Activated T-helper 2 cell treated with anti-CD3 and anti-CD28 coated beads, Interferon-gamma antibody, Interleukin-2, Interleukin-4, amounts not matched to agents 10 μg/mL and 5 μg/mL and 100 μg/mL, durations not matched to agents 14 hours and 24 hours and 36 hours (primary cell): ENCODE measurements at regions of chr19 and their contacts with region 1.

Region 1: DNA sequence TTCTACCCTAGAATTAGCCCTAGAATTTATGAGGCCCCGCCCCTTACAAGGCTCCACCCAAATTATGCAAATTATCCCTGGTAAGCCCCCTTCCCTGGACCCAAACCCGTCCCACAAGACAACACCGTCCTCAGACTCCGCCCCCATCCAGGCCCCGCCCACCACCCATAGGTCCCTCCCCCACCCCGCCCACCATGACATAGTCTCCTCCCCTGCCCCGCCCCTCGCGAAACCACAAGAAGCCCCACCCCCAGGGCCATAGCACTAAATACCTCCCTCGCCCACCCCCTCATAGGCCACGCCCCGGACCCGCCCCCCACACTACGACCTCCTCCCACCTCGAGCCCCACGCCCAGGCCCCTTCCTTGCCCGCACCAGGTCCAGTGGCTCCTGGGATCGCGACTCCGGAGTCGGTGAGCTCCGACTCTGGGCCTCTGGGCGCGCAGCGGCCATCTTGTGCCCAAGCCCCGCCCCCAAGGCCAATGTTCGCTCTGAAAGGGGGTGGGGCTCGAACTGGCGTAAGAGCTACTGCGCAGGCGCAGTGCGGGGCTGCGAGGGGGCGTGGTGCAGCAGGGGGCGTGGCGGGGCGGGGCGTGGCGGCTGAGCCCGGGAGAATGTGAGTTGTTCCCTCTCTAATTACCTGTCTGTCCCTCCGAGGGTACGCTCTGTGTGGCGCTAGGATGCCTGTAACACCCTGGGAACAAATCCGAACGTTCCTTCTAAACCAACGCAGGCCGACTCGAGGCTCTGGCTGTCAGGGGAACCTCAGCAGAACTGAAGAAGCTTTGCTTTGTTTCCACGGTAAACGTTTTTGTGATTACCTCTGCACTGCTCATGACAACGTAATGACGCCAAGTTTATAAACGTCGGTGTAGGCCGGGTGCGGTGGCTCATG is at the start of gene ZNF784:
- DNase-seq: peak; percentile 89
- H3K4me3 Mint-ChIP-seq: peak within 1 kb of the TSS; percentile 89
- H3K27ac Mint-ChIP-seq: peak within 1 kb of the TSS; percentile 98
- H3K4me1 Mint-ChIP-seq: peaks cover 36% of the 10 kb centered on the region
- H3K27me3 Mint-ChIP-seq: peaks cover 6% of the 10 kb centered on the region
- total RNA-seq, gene ZNF784: 4.3 and 4.9 TPM in 2 replicates

Region 2: GRCh38 chr19:55117636-55118391 is 506.5 kb before region 1 on chr19 and contains the start of gene PPP1R12C:
- intact Hi-C with region 1: loop called (anchors 10 kb)
- DNase-seq: peak; percentile 96
- H3K4me3 Mint-ChIP-seq: peak within 1 kb of the TSS; percentile 100
- H3K27ac Mint-ChIP-seq: peak within 1 kb of the TSS; percentile 93
- H3K4me1 Mint-ChIP-seq: peaks cover 29% of the 10 kb centered on the region
- H3K27me3 Mint-ChIP-seq: peaks cover 6% of the 10 kb centered on the region
- total RNA-seq, gene PPP1R12C: 104 and 108 TPM in 2 replicates

Region 3: GRCh38 chr19:55586976-55587668 is 37.2 kb before region 1 on chr19:
- intact Hi-C with region 1: loop called (anchors 5 kb)
- DNase-seq: peak; percentile 86
- H3K4me3 Mint-ChIP-seq: peak overlapping the region; percentile 75
- H3K27ac Mint-ChIP-seq: no peak overlapping the region
- H3K4me1 Mint-ChIP-seq: peaks cover 13% of the 10 kb centered on the region
- H3K27me3 Mint-ChIP-seq: peaks cover 13% of the 10 kb centered on the region

Region 4: GRCh38 chr19:55653758-55654539 is 29.6 kb after region 1 on chr19:
- intact Hi-C with region 1: no loop called
- DNase-seq: peak; percentile 99
- H3K4me3 Mint-ChIP-seq: peak overlapping the region; percentile 91
- H3K27ac Mint-ChIP-seq: peak overlapping the region; percentile 99
- H3K4me1 Mint-ChIP-seq: peaks cover 27% of the 10 kb centered on the region
- H3K27me3 Mint-ChIP-seq: no peaks in the 10 kb centered on the region